ENCODE measurements at regions of chrX and their contacts with region 1.

Region 1: DNA sequence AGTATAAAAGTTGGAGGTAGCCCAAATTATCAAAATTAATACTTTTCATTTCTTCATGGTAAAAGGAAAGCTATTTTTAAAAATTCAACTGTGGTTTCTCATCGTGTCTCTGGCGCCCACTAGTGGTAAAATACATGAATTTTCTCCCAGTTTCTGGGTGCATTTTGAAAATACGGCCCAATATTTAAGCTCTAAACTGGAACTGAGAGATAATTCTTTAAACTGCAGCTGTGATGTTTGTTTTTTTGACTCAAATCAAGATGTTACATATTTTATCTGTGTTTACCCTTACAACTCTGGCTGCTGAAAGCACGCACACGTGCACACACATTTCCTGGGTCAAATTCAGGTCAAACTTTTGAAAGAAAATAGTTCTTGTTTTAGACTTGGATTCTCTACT is 123.9 kb upstream of the ACSL4 start:
- DNase-seq: peak in 1 of 7 donors; percentile 21
- H3K4me3 ChIP-seq: no peak overlapping the region
- H3K27ac ChIP-seq: no peak overlapping the region
- H3K4me1 ChIP-seq: no peaks in the 10 kb centered on the region
- H3K27me3 ChIP-seq: no peaks in the 10 kb centered on the region
- CTCF ChIP-seq: peak; percentile 71 to 90 (median 77)
- POLR2A ChIP-seq: no peak

Region 2: GRCh38 chrX:109696146-109696740 is 160.7 kb before region 1 on chrX:
- intact Hi-C with region 1: no loop called
- DNase-seq: no peak
- H3K4me3 ChIP-seq: no peak overlapping the region
- H3K27ac ChIP-seq: no peak overlapping the region
- H3K4me1 ChIP-seq: peaks cover 0 to 19% of the 10 kb centered on the region in 2 donors
- H3K27me3 ChIP-seq: no peaks in the 10 kb centered on the region
- CTCF ChIP-seq: no peak
- POLR2A ChIP-seq: no peak

Region 3: GRCh38 chrX:109714340-109714958 is 142.5 kb before region 1 on chrX:
- intact Hi-C with region 1: loop called (anchors 5 to 10 kb)
- DNase-seq: no peak
- H3K4me3 ChIP-seq: no peak overlapping the region
- H3K27ac ChIP-seq: no peak overlapping the region
- H3K4me1 ChIP-seq: peaks cover 0 to 14% of the 10 kb centered on the region in 2 donors
- H3K27me3 ChIP-seq: no peaks in the 10 kb centered on the region
- CTCF ChIP-seq: no peak
- POLR2A ChIP-seq: no peak

Measured in adrenal gland (tissue), 19 donors.